ENCODE measurements at regions of chr2 and their contacts with region 1.

Region 1: GRCh38 chr2:218710687-218711549 is at the start of gene TTLL4:
- DNase-seq: peak; percentile 99
- H3K4me3 Mint-ChIP-seq: peak within 1 kb of the TSS; percentile 98
- H3K27ac Mint-ChIP-seq: peak within 1 kb of the TSS; percentile 80
- H3K4me1 Mint-ChIP-seq: peaks cover 15% of the 10 kb centered on the region
- H3K27me3 Mint-ChIP-seq: peaks cover 3% of the 10 kb centered on the region
- total RNA-seq, gene TTLL4: 23.7 to 24.7 TPM

Region 2: DNA sequence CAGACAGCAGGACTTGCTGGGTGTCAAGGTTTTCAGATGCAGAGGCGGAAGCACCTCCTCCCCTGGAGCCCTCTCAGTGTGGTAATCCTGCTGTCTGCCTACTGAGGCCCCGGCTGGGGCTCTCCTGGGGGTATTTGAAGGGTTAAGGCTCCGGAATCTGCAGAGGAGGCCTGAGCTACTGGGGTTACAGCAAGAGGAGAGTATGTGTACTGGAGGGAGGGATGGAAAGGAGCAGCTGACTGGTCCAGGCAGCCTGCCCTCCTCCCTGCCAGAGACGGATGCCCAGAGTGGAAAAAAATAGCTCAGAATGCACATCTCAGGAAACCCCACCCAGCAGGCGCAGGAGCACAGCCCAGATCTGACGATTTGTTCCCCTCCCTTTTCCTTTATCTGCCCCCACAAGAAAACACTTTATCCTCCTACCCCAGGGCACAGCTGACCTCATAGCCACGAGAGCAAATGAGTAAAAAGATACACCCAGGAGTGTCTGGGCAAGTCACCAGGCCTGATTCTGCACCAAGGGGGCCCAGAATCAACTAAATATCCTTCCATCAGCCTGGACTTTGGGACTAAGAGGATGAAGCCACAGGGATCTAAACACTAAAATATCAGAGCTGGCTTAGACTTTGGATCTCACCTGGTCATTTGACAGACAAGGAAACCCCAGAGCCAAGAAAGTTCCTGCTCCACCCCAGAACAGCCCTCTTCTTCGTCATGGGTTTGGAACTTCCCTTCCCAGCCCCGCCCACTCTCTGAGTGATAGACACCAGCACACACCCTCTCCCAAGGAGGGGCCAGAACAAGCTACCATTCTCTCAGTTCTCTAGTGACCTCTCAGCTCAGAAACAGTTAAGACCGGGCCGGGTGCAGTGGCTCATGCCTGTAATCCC is 424.1 kb before region 1 on chr2:
- CTCF ChIA-PET with region 1: no interaction called
- intact Hi-C with region 1: loop called (anchors 2 kb)
- DNase-seq: peak; percentile 95
- H3K4me3 Mint-ChIP-seq: peak overlapping the region; percentile 80
- H3K27ac Mint-ChIP-seq: peak overlapping the region; percentile 98
- H3K4me1 Mint-ChIP-seq: peaks cover 73% of the 10 kb centered on the region
- H3K27me3 Mint-ChIP-seq: no peaks in the 10 kb centered on the region

Measured in activated naive CD4-positive, alpha-beta T cell treated with anti-CD3 and anti-CD28 coated beads for 36 hours (primary cell).